ENCODE measurements at regions of chr9 and their contacts with region 1.

Region 1: GRCh38 chr9:100598641-100599145 is 20.8 kb downstream of the CAVIN4 start:
- DNase-seq: peak; percentile 71
- ATAC-seq: peak; percentile 93
- H3K4me3 ChIP-seq: peak overlapping the region; percentile 47
- H3K27ac ChIP-seq: no peak overlapping the region
- H3K4me1 ChIP-seq: peaks cover 1% of the 10 kb centered on the region; the same call in 1 of the 2 replicates
- H3K27me3 ChIP-seq: no peaks in the 10 kb centered on the region; the same call in 1 of the 2 replicates
- CTCF ChIP-seq: no peak
- POLR2A ChIP-seq: no peak
- RAD21 ChIP-seq: no peak

Region 2: DNA sequence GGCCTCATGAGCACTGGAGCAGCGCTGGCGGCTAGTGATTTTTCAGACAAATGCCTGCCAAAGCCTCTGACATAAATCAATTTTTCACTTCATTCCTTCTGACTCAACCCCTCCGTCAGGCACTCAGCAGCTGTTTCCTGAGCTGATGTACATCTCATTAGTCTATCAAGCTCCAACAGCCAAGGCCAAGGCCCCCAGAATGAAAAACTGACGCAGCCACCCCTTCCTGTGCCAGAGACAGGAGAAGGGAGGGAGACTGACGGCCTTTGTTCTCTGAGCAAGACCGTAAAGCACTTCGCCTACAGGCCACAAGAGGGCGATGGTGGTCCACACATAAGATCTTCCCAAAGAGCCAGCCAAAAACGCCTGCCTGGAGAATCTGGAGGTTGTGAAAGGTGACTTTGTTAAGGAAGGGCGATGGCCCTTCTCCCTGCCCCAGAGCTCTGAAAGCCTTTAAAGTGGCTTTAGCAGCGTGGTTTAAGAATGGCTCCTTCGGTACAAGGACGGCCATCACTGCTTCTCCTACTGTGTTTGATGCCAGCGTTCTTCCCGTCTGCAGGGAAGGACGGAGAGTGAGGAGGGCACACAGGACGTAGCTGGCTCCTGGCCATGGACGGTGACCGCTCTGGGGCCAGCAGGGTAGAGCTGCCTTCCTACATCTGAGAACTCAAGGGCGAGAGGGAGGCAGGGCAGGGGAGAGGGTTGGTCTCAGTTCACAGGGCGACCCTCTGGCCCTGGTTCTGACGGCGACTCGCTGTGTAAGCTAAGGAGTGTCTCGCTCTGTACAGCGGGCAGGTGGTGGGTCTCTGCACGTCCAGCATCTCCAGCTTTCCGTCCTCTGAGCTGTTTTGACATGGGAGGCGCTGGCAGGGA is 1414.0 kb before region 1 on chr9:
- CTCF ChIA-PET with region 1: no interaction called
- POLR2A ChIA-PET with region 1: no interaction called
- dilution Hi-C with region 1: no loop called
- in situ Hi-C with region 1: loop called (anchors 25 kb)
- intact Hi-C with region 1: loop called (anchors 2 kb)
- DNase-seq: peak; percentile 93
- ATAC-seq: peak; percentile 94
- H3K4me3 ChIP-seq: no peak overlapping the region
- H3K27ac ChIP-seq: no peak overlapping the region
- H3K4me1 ChIP-seq: peaks cover 5% of the 10 kb centered on the region
- H3K27me3 ChIP-seq: peaks cover 6% of the 10 kb centered on the region
- CTCF ChIP-seq: peak; percentile 92
- POLR2A ChIP-seq: no peak
- RAD21 ChIP-seq: peak; percentile 91

Region 3: DNA sequence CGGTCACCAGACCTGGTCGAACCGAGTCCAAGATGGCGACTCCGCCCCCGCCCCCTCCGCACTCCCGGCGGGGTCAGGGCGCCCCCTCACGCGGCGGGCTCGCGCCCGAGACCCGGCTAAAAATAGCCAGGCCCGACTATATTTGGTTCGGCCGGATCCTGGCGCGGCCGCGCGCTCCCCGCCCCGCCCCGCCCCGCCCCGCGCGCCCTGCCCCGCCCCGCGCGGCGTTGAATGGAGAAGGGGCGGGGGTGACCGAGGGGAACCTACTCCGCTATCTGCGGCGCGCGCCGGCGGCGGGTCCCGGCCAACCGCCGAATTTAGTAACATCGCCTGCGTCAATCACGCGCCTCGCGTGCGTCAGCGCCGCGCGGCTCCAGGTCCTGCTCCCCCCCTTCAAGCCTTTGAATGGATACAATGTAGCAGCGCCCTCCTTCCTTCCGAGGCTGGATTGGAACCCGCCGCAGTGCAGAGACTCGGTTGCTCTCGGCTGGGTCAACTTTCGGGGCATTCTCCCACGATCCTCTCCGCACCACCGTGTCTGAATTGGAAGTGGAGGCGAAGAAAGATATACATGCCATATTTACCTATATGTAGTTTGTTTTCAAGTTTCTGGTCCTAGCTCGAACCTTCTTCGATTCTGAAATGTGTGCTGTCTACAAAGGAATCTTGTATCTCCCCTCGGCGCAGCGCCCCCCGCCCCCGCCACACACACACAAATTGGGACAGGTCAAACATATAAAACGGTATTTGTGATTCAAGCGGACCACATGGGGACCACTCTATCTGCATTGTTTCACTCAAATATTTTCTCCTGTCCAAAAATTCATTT is 778.6 kb before region 1 on chr9:
- CTCF ChIA-PET with region 1: no interaction called
- POLR2A ChIA-PET with region 1: no interaction called
- dilution Hi-C with region 1: no loop called
- in situ Hi-C with region 1: no loop called
- intact Hi-C with region 1: loop called (anchors 5 kb)
- DNase-seq: peak; percentile 96
- ATAC-seq: peak; percentile 73
- H3K4me3 ChIP-seq: peak overlapping the region; percentile 78
- H3K27ac ChIP-seq: peak overlapping the region; percentile 91
- H3K4me1 ChIP-seq: peaks cover 6% of the 10 kb centered on the region
- H3K27me3 ChIP-seq: no peaks in the 10 kb centered on the region
- CTCF ChIP-seq: peak; percentile 24; the same call in 1 of the 2 replicates
- POLR2A ChIP-seq: peak; percentile 82; the same call in 1 of the 2 replicates
- RAD21 ChIP-seq: peak; percentile 29; the same call in 1 of the 2 replicates

Region 4: GRCh38 chr9:100111235-100111634 is 487.5 kb before region 1 on chr9:
- CTCF ChIA-PET with region 1: no interaction called
- POLR2A ChIA-PET with region 1: no interaction called
- dilution Hi-C with region 1: no loop called
- in situ Hi-C with region 1: no loop called
- intact Hi-C with region 1: loop called (anchors 1 kb)
- DNase-seq: peak; percentile 98
- ATAC-seq: peak; percentile 96
- H3K4me3 ChIP-seq: no peak overlapping the region
- H3K27ac ChIP-seq: no peak overlapping the region
- H3K4me1 ChIP-seq: no peaks in the 10 kb centered on the region
- H3K27me3 ChIP-seq: no peaks in the 10 kb centered on the region
- CTCF ChIP-seq: no peak
- POLR2A ChIP-seq: no peak
- RAD21 ChIP-seq: no peak

Region 5: GRCh38 chr9:100322954-100323536 is 275.6 kb before region 1 on chr9:
- CTCF ChIA-PET with region 1: interaction called, 3 read pairs
- POLR2A ChIA-PET with region 1: no interaction called
- dilution Hi-C with region 1: no loop called
- in situ Hi-C with region 1: no loop called
- intact Hi-C with region 1: loop called (anchors 2 kb)
- DNase-seq: peak; percentile 51
- ATAC-seq: peak; percentile 66; the same call in 1 of the 2 replicates
- H3K4me3 ChIP-seq: no peak overlapping the region
- H3K27ac ChIP-seq: no peak overlapping the region
- H3K4me1 ChIP-seq: no peaks in the 10 kb centered on the region
- H3K27me3 ChIP-seq: no peaks in the 10 kb centered on the region
- CTCF ChIP-seq: peak; percentile 76
- POLR2A ChIP-seq: no peak
- RAD21 ChIP-seq: peak; percentile 66

Region 6: GRCh38 chr9:100619665-100620064 is 21.0 kb after region 1 on chr9:
- CTCF ChIA-PET with region 1: interaction called, 10 read pairs
- POLR2A ChIA-PET with region 1: no interaction called
- dilution Hi-C with region 1: no loop called
- in situ Hi-C with region 1: no loop called
- intact Hi-C with region 1: no loop called
- DNase-seq: no peak
- ATAC-seq: no peak
- H3K4me3 ChIP-seq: no peak overlapping the region
- H3K27ac ChIP-seq: no peak overlapping the region
- H3K4me1 ChIP-seq: no peaks in the 10 kb centered on the region
- H3K27me3 ChIP-seq: no peaks in the 10 kb centered on the region
- CTCF ChIP-seq: no peak
- POLR2A ChIP-seq: no peak
- RAD21 ChIP-seq: no peak